Activated naive CD4-positive, alpha-beta T cell treated with anti-CD3 and anti-CD28 coated beads, Interleukin-2, amount 10 ng/mL, durations not matched to agents 7 days and 5 days (primary cell): ENCODE measurements at regions of chr11 and their contacts with region 1.

Region 1: GRCh38 chr11:117932067-117932370 is 2.8 kb upstream of the TMPRSS13 start:
- DNase-seq: no peak
- H3K4me3 Mint-ChIP-seq: no peak overlapping the region
- H3K27ac Mint-ChIP-seq: peak overlapping the region; percentile 47
- H3K4me1 Mint-ChIP-seq: peaks cover 52% of the 10 kb centered on the region
- H3K27me3 Mint-ChIP-seq: peaks cover 40% of the 10 kb centered on the region

Region 2: DNA sequence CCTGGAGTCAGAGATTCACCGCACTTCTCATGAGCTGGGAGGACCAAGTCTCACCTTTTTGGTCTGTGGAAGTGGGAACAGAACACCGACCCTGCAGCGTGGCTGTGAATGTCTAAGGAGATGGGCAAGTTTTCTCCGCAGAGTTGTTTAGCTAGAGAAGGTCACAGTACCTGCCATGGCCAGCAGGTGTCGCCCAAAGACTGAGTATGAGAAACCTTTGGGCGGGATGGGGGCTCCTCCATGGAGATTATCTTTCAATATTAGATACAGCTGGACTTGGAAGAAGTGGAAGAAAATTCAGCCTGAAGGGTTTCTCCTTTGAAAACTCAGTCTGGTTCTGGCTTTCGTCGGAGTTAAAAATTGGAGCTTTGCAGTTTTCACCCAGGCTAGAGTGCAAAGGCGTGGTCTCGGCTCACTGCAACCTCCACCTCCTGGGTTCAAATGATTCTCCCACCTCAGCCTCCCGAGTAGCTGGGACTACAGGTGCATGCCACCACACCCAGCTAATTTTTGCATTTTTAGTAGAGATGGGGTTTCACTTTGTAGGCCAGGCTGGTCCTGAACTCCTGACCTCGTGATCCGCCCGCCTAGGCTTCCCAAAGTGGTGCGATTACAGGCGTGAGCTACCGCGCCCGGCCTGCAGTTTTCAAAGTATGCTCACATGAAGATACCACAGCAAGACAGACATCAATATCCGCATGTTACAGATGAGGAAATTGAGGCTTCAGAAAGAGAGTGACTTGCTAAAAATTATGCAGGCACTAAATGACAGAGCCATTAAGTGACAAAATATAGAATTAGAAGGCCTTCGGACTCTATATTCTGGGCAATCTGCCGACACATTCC is 124.3 kb before region 1 on chr11:
- CTCF ChIA-PET with region 1: interaction called, 10 read pairs
- DNase-seq: peak; percentile 83
- H3K4me3 Mint-ChIP-seq: no peak overlapping the region
- H3K27ac Mint-ChIP-seq: no peak overlapping the region
- H3K4me1 Mint-ChIP-seq: peaks cover 9% of the 10 kb centered on the region
- H3K27me3 Mint-ChIP-seq: peaks cover 53% of the 10 kb centered on the region

Region 3: DNA sequence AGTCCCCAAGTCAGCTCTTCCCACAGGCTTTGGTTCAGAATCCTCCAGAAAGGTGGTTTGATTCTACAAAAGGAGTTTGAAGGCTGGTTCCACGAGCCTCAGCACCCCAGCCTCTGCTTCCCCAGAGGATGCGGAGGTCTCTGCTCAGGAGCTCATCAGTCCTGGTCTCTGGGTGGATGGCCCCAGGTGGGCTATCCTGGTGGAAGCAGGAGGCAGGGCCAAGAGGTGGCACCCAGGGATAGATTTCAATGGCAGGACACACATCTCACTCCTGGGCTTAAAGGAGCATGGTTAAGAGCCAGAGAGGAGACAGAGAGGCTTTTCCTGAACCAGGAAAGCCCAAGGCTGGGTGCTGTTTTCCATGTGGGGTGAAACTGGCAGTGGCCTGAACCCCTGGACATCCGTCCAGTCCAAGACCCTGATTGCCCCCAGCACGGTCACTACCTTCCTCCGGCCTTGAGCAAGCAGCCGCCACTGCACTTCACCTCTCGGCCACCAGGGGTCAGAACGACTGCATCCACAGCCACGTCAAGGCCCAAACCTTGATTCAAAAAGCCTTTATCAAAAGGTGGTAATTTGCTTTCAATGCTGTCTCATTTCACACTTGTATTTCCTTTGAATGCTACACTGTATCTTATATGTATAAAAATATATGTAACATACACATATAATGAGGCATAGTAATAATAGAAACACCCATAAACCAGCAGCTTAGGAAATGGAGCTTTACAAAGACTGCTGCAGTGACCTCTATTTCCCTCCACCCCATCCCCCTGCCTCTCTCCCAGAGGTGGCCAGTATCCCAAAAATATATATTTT is 88.1 kb before region 1 on chr11:
- CTCF ChIA-PET with region 1: interaction called, 17 read pairs
- DNase-seq: peak; percentile 87
- H3K4me3 Mint-ChIP-seq: no peak overlapping the region
- H3K27ac Mint-ChIP-seq: no peak overlapping the region
- H3K4me1 Mint-ChIP-seq: no peaks in the 10 kb centered on the region
- H3K27me3 Mint-ChIP-seq: peaks cover 23% of the 10 kb centered on the region

Region 4: DNA sequence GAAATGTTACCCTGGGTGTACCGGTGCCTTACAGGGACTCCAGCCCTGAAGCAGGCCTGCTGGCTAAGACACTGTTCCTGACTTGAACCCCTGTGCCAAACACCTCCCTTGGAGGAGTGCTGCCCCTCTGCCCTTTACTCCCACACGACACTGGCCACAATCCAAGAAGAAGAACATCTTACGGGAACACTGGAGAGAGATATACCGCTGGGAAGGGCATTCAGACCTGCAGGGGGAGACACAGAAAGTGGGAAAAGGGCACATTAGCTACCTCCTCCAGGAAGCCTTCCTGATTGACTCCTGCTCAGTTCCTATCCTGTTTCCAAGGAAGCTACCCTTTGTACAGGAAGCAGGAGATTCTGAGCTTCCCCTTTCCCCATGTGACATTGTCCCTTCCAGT is 21.5 kb before region 1 on chr11:
- CTCF ChIA-PET with region 1: no interaction called
- DNase-seq: no peak
- H3K4me3 Mint-ChIP-seq: no peak overlapping the region
- H3K27ac Mint-ChIP-seq: no peak overlapping the region
- H3K4me1 Mint-ChIP-seq: peaks cover 8% of the 10 kb centered on the region
- H3K27me3 Mint-ChIP-seq: peaks cover 39% of the 10 kb centered on the region

Region 5: GRCh38 chr11:118010738-118011461 is 78.9 kb after region 1 on chr11:
- CTCF ChIA-PET with region 1: no interaction called
- DNase-seq: no peak
- H3K4me3 Mint-ChIP-seq: no peak overlapping the region
- H3K27ac Mint-ChIP-seq: peak overlapping the region; percentile 64
- H3K4me1 Mint-ChIP-seq: peaks cover 82% of the 10 kb centered on the region
- H3K27me3 Mint-ChIP-seq: peaks cover 5% of the 10 kb centered on the region